Thyroid gland (tissue), 4 donors: ENCODE measurements at regions of chr3 and their contacts with region 1.

Region 1: DNA sequence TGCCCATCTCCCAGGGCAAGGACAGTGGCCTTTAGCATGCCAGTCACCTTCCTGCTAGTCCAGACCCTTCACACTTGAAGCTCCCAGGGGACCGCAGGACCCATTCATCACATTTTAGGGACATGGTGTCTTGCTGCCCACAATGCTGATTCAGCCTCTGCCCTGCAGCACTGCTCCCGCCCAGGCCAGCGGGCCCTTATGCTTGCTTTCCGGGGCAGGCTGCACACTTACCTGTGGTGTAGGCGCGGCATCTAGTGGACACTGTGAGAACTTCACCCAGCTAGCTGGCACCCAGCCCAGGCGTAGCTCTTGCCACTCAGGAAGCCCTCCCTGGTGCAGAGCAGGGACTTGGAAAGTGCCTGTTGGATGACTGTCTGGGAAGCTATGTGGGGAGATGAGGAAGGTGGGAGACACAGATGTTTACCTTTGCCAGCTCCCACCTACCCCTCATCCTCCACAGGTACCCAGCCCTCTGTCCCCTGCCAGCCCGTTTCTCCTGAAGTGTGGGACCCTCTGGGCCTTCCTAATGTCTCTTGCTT is 26.2 kb upstream of the NR2C2 start:
- DNase-seq: peak; percentile 90 to 93
- H3K4me3 ChIP-seq: no peak overlapping the region
- H3K27ac ChIP-seq: no peak overlapping the region
- H3K4me1 ChIP-seq: peaks cover 0 to 4% of the 10 kb centered on the region in 2 donors
- H3K27me3 ChIP-seq: no peaks in the 10 kb centered on the region
- CTCF ChIP-seq: peak; percentile 98 to 100 (median 99)
- POLR2A ChIP-seq: no peak

Region 2: DNA sequence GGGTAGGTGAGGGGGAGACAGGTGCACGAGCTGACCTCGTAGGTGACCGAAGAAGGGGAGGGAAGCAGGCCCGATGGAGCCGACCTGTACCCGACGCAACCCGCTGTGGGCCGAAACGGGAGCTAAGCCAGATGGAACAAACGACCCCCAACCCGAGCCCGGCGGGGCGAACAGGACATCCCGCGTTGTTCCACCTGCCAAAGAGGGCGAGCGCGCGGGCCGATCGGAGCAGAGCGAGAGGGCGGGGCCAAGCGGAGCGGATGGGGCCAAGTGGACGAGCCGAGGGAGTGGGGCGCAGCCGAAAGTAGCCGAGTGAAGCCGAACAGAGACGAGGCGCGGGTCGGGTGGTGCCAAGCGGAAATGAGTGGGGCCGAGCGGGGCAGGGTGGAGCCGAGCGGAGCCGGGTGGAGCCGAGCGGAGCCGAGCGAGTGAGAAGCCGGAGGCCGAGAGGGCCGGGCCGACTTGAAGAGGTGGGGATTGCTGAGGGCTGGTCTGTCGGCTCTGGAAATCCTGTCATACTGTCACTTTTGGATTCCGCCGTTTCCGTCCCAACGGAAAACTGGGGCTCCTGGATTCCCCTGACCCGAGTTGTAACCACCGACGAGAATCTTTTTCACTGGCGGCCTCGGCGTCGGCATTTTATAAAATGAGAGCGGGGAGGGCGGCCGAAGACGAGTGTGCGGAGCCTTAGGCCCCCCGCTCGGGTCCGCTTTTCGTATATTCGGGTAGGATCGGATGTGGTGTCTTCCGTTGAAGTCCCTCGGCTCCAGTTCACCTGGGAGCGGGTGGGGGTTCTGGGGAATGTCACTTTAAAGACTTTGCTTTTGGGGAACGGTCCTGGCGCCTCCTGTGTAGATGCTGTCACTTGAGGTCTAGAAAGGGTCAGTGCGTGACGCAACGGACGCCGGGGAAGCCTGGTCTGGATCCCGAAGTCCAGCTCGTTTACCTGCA is 1025.7 kb before region 1 on chr3:
- intact Hi-C with region 1: loop called (anchors 10 kb)
- DNase-seq: peak; percentile 95
- H3K4me3 ChIP-seq: peak overlapping the region; percentile 8 to 69 (median 64)
- H3K27ac ChIP-seq: peak overlapping the region in 2 of 3 donors; percentile 28 to 58
- H3K4me1 ChIP-seq: peaks cover 10% of the 10 kb centered on the region in 2 donors
- H3K27me3 ChIP-seq: no peaks in the 10 kb centered on the region
- CTCF ChIP-seq: no peak
- POLR2A ChIP-seq: peak in 1 of 2 donors; percentile 76

Region 3: GRCh38 chr3:14791343-14791945 is 129.7 kb before region 1 on chr3:
- intact Hi-C with region 1: loop called (anchors 5 kb)
- DNase-seq: peak; percentile 47 to 52
- H3K4me3 ChIP-seq: no peak overlapping the region
- H3K27ac ChIP-seq: no peak overlapping the region
- H3K4me1 ChIP-seq: peaks cover 0 to 7% of the 10 kb centered on the region in 2 donors
- H3K27me3 ChIP-seq: no peaks in the 10 kb centered on the region
- CTCF ChIP-seq: peak; percentile 23 to 54 (median 34)
- POLR2A ChIP-seq: no peak

Region 4: GRCh38 chr3:15051531-15051930 is 130.4 kb after region 1 on chr3:
- intact Hi-C with region 1: loop called (anchors 10 kb)
- DNase-seq: peak; percentile 40 to 46
- H3K4me3 ChIP-seq: no peak overlapping the region
- H3K27ac ChIP-seq: no peak overlapping the region
- H3K4me1 ChIP-seq: no peaks in the 10 kb centered on the region
- H3K27me3 ChIP-seq: no peaks in the 10 kb centered on the region
- CTCF ChIP-seq: peak in 5 of 6 experiments; percentile 11 to 58 (median 41)
- POLR2A ChIP-seq: no peak